ENCODE measurements at regions of chr1 and their contacts with region 1.

Region 1: GRCh38 chr1:47192458-47193384 is 2.9 kb upstream of the PDZK1IP1 start:
- DNase-seq: peak; percentile 73
- H3K4me3 ChIP-seq: no peak overlapping the region
- H3K27ac ChIP-seq: no peak overlapping the region
- H3K4me1 ChIP-seq: no peaks in the 10 kb centered on the region
- H3K27me3 ChIP-seq: no peaks in the 10 kb centered on the region
- CTCF ChIP-seq: peak; percentile 97

Region 2: GRCh38 chr1:47262787-47263413 is 70.2 kb after region 1 on chr1:
- CTCF ChIA-PET with region 1: interaction called, 3 read pairs
- POLR2A ChIA-PET with region 1: no interaction called
- intact Hi-C with region 1: loop called (anchors 2 kb)
- DNase-seq: peak; percentile 59
- H3K4me3 ChIP-seq: no peak overlapping the region
- H3K27ac ChIP-seq: no peak overlapping the region
- H3K4me1 ChIP-seq: no peaks in the 10 kb centered on the region
- H3K27me3 ChIP-seq: no peaks in the 10 kb centered on the region
- CTCF ChIP-seq: peak; percentile 64

Region 3: DNA sequence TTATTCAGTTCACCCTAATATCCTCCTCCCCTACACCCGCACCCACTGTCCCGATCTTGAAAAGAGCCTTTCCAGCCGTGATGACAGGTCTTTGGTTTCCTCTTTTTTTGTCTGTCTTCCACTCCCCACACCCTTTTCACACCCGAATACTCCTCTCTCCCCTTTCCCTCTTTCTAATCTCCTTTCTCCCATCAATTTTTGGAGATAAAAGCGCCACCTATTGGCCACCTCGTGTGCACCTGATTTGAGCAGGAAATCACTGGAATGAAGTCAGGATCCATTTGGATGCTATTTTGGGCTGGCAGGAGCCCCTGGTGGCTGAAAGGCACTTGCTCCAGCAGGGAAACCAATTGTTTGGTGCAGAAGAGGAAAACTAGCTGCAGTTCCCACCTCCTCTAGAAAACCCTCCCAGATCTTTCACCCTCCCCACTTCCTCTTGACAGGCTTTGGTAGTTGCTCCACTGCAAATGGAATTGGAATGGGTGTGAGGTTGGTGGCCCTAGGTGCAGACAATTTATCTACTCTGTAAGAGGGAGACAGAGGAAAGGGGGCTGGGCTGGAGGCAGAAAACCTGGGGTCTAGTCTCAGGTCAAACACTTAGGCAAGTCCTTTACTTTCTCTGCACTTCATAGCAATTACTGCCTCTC is 231.7 kb after region 1 on chr1:
- CTCF ChIA-PET with region 1: no interaction called
- POLR2A ChIA-PET with region 1: no interaction called
- intact Hi-C with region 1: loop called (anchors 5 kb)
- DNase-seq: peak; percentile 81
- H3K4me3 ChIP-seq: no peak overlapping the region
- H3K27ac ChIP-seq: no peak overlapping the region
- H3K4me1 ChIP-seq: no peaks in the 10 kb centered on the region
- H3K27me3 ChIP-seq: peaks cover 23% of the 10 kb centered on the region
- CTCF ChIP-seq: peak; percentile 91

Region 4: GRCh38 chr1:47515164-47515789 is 322.6 kb after region 1 on chr1:
- CTCF ChIA-PET with region 1: no interaction called
- POLR2A ChIA-PET with region 1: no interaction called
- intact Hi-C with region 1: no loop called
- DNase-seq: no peak
- H3K4me3 ChIP-seq: no peak overlapping the region
- H3K27ac ChIP-seq: no peak overlapping the region
- H3K4me1 ChIP-seq: no peaks in the 10 kb centered on the region
- H3K27me3 ChIP-seq: peaks cover 24% of the 10 kb centered on the region
- CTCF ChIP-seq: no peak

Region 5: GRCh38 chr1:47710329-47711071 is 517.8 kb after region 1 on chr1:
- CTCF ChIA-PET with region 1: interaction called, 4 read pairs
- POLR2A ChIA-PET with region 1: no interaction called
- intact Hi-C with region 1: loop called (anchors 5 kb)
- DNase-seq: peak; percentile 58
- H3K4me3 ChIP-seq: peak overlapping the region; percentile 34
- H3K27ac ChIP-seq: no peak overlapping the region
- H3K4me1 ChIP-seq: peaks cover 17% of the 10 kb centered on the region
- H3K27me3 ChIP-seq: peaks cover 95% of the 10 kb centered on the region
- CTCF ChIP-seq: peak; percentile 97

Measured in A673 (cell line).